ENCODE measurements at regions of chr12 and their contacts with region 1.

Region 1: DNA sequence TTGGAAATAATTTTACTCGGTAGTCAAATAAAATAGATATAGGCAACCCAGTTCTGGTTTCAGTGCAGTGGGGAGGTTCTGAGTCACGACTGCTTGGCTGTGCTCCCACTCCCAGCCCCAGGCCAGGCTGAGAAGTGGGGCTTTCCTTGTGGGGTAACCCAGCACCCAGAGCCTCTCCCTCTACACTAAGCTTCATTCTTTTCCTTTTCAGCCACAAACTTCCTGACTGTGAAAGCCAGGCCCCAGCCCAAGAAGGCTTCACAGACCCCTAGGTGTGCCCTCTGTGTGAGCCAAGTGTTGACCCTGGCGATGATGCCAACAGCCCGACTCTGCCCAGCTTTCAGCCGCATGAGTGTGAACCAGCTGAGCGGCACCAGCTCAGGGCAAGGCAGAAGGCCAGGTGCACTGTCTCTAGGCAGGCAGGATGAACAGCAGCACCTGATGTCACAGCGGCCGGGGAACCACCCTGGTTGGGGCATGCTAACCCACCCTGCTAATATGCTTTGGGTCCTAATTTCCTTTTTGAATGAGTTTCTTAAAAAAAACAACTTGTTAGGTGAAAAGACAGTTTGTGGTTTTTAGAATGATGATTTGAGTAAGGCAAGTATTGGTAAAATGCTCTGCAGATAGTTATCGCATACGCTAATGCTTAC is 42.2 kb upstream of the ATP23 start:
- DNase-seq: peak; percentile 55 to 95 (median 76)
- ATAC-seq: peak; percentile 89
- H3K4me3 ChIP-seq: no peak overlapping the region
- H3K4me3 Mint-ChIP-seq: peak overlapping the region; percentile 71
- H3K27ac ChIP-seq: peak overlapping the region; percentile 55 to 78
- H3K27ac Mint-ChIP-seq: peak overlapping the region; percentile 99
- H3K4me1 ChIP-seq: peaks cover 45% of the 10 kb centered on the region
- H3K4me1 Mint-ChIP-seq: peaks cover 50% of the 10 kb centered on the region
- H3K27me3 ChIP-seq: no peaks in the 10 kb centered on the region
- H3K27me3 Mint-ChIP-seq: peaks cover 3% of the 10 kb centered on the region
- CTCF ChIP-seq: no peak

Region 2: DNA sequence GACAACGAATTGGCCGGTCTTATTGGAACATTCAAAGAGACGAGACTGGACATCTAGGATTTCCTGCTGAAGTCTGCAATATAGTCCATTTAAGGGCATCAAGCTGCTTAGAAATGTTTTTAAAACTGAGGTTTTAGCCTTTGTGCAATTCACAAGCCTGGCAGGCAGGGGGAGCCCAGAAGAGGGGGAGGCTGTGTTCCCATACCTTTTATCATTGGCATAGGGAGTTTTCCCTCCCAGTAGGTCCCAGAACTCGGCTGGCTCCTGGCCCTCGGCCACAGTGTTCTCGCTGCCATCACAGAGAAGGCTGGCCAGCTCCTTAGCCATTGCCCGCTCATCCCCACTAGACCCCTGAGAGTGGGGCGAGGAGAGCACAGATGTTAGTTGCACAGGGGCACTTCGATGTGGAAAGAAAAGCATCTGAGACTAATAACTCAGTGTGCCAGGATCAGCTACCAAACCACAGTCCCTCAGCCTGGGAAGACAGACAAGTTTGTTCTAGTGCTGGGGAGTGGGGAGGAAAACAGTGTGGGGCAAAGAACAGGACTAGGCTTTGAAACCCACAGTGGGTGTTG is 95.7 kb before region 1 on chr12:
- CTCF ChIA-PET with region 1: interaction called, 88 read pairs
- POLR2A ChIA-PET with region 1: interaction called, 4 read pairs
- intact Hi-C with region 1: no loop called
- DNase-seq: peak in 6 of 9 experiments; percentile 11 to 48 (median 40)
- ATAC-seq: peak; percentile 55
- H3K4me3 ChIP-seq: no peak overlapping the region
- H3K4me3 Mint-ChIP-seq: no peak overlapping the region
- H3K27ac ChIP-seq: no peak overlapping the region
- H3K27ac Mint-ChIP-seq: no peak overlapping the region
- H3K4me1 ChIP-seq: no peaks in the 10 kb centered on the region
- H3K4me1 Mint-ChIP-seq: no peaks in the 10 kb centered on the region
- H3K27me3 ChIP-seq: no peaks in the 10 kb centered on the region
- H3K27me3 Mint-ChIP-seq: no peaks in the 10 kb centered on the region
- CTCF ChIP-seq: peak; percentile 71

Region 3: DNA sequence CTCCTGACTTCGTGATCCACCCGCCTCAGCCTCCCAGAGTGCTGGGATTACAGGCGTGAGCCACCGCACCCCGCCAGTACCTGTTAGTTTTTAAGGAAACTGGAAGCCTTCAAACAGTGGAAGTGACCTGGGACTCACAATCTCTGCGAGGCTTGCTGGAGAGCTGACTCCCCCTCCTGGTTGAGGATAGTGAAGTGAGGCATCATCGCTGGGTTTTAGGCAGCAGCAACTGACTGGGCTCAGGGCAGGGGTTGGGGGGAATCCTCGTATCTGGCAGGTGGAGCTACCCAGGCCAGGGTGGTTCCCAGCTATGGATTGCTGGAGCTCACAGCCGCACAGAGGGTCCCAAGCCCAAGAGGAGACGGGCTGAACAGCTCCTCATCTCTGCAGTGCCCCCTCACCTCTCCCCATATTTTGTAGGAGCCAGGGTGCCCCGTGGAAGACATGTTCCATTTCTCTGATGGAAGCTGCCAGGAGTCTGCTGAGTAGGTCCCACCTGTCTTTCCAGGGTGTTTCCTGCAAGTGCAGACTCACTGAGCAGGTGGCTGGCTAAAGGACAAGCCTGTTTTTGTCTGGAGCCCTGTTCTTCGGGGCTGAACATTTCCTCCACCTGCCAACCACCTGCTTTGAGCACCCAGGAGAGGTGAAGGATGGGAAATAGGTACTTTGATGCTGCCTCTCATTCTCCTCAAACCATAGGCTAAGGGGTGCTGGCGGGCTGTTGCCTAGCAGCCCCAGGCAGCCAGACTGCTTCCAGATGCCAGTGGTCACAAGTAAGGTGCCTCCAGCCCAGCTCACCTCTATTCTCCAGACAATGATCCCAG is 83.7 kb before region 1 on chr12:
- CTCF ChIA-PET with region 1: interaction called, 20 read pairs
- POLR2A ChIA-PET with region 1: interaction called, 10 read pairs
- intact Hi-C with region 1: no loop called
- DNase-seq: peak in 1 of 9 experiments; percentile 30
- ATAC-seq: no peak
- H3K4me3 ChIP-seq: no peak overlapping the region
- H3K4me3 Mint-ChIP-seq: no peak overlapping the region
- H3K27ac ChIP-seq: no peak overlapping the region
- H3K27ac Mint-ChIP-seq: no peak overlapping the region
- H3K4me1 ChIP-seq: no peaks in the 10 kb centered on the region
- H3K4me1 Mint-ChIP-seq: no peaks in the 10 kb centered on the region
- H3K27me3 ChIP-seq: no peaks in the 10 kb centered on the region
- H3K27me3 Mint-ChIP-seq: no peaks in the 10 kb centered on the region
- CTCF ChIP-seq: no peak

Region 4: DNA sequence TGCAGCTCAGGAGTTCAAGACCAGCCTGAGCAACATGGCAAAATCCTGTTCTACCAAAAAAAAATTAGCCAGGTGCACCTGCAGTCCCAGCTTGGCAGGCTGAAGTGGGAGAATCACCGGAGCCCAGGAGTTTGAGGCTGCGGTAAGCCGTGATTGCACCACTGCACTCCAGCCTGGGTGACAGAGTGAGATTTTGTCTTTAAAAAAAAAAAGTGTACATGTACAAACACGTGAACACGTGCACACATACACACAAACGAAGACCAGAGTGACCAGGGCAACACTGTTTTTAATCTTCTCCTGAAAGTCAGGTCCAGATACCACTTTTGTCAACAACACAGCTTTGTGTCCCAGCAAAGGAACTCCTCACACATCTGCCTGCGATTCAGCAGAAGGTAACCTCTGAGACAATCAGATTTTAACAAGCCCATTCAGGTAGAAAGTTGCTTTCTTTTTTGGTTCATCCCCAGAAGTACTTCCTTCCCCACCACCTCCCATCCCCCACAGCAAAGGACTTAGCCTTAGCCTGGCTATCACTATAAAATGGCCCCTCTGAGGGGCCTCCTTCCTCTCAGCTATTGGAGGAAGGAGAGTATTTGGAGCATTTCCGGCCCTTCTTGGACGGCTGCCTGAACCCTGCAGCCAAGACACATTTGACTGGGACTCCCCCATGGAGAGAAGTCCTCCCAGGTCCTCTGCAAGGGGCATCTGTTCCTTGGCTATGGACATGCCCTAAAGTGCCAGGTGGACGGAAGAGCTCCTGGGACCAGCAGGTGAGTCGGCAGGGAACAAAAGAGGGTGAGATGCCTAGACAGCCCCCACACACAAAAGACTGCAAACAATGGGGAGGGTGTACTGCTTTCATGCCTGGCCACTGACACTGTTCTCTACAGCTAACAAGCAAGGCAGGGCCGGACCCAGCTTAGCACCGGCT is 62.4 kb before region 1 on chr12:
- CTCF ChIA-PET with region 1: interaction called, 102 read pairs
- POLR2A ChIA-PET with region 1: interaction called, 4 read pairs
- intact Hi-C with region 1: no loop called
- DNase-seq: peak in 5 of 9 experiments; percentile 42 to 73 (median 55)
- ATAC-seq: peak; percentile 26
- H3K4me3 ChIP-seq: peak overlapping the region in 1 of 2 experiments; percentile 32
- H3K4me3 Mint-ChIP-seq: peak overlapping the region; percentile 63
- H3K27ac ChIP-seq: peak overlapping the region; percentile 37 to 64
- H3K27ac Mint-ChIP-seq: peak overlapping the region; percentile 94
- H3K4me1 ChIP-seq: peaks cover 98% of the 10 kb centered on the region
- H3K4me1 Mint-ChIP-seq: peaks cover 93% of the 10 kb centered on the region
- H3K27me3 ChIP-seq: no peaks in the 10 kb centered on the region
- H3K27me3 Mint-ChIP-seq: no peaks in the 10 kb centered on the region
- CTCF ChIP-seq: no peak

Region 5: DNA sequence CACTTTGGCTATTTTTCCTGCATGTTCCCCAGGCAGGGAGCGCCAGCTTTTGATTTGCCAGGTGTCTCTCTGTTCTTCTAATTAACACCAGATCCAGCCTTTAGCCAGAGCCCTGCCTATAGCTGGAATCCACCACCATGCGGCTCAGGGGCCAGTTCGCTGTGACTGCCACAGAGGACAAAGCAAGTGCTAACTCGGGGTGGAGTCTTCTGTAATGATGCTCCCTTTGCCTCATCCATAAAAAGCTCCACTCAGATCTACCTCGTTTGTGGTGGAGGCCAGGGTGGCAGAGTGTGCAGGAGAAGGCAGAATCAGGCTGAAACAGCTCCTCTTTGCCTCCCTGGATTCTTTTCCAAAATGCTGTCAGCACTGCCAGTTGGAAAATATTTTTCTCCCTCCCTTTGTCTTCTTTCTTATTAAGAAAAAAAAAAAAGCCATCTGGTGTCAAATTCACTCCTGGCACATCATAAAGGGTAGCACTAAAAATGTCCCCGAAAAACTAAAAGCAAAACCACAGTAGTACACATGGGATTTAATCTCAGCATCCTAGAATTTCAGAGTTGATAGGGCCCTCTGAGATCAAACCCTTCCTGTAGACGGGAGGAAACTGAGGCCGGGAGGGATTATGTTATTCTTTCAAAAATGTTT is 34.6 kb before region 1 on chr12:
- CTCF ChIA-PET with region 1: interaction called, 5 read pairs
- POLR2A ChIA-PET with region 1: no interaction called
- intact Hi-C with region 1: loop called in 1 of 2 experiments (anchors 5 kb)
- DNase-seq: no peak
- ATAC-seq: no peak
- H3K4me3 ChIP-seq: peak overlapping the region; percentile 37 to 40
- H3K4me3 Mint-ChIP-seq: peak overlapping the region; percentile 71
- H3K27ac ChIP-seq: no peak overlapping the region
- H3K27ac Mint-ChIP-seq: no peak overlapping the region
- H3K4me1 ChIP-seq: peaks cover 5% of the 10 kb centered on the region
- H3K4me1 Mint-ChIP-seq: peaks cover 7% of the 10 kb centered on the region
- H3K27me3 ChIP-seq: peaks cover 0 to 6% of the 10 kb centered on the region in 2 experiments
- H3K27me3 Mint-ChIP-seq: peaks cover 23% of the 10 kb centered on the region
- CTCF ChIP-seq: no peak